Endothelial cell of umbilical vein (primary cell): ENCODE measurements at regions of chr5 and their contacts with region 1.

Region 1: GRCh38 chr5:54844905-54845566 is 140.4 kb downstream of the ESM1 start:
- DNase-seq: peak; percentile 65
- H3K4me3 ChIP-seq: no peak overlapping the region
- H3K27ac ChIP-seq: no peak overlapping the region
- H3K4me1 ChIP-seq: peaks cover 6% of the 10 kb centered on the region
- H3K27me3 ChIP-seq: peaks cover 0 to 2% of the 10 kb centered on the region in 2 experiments
- CTCF ChIP-seq: peak; percentile 17 to 45
- POLR2A ChIP-seq: no peak

Region 2: DNA sequence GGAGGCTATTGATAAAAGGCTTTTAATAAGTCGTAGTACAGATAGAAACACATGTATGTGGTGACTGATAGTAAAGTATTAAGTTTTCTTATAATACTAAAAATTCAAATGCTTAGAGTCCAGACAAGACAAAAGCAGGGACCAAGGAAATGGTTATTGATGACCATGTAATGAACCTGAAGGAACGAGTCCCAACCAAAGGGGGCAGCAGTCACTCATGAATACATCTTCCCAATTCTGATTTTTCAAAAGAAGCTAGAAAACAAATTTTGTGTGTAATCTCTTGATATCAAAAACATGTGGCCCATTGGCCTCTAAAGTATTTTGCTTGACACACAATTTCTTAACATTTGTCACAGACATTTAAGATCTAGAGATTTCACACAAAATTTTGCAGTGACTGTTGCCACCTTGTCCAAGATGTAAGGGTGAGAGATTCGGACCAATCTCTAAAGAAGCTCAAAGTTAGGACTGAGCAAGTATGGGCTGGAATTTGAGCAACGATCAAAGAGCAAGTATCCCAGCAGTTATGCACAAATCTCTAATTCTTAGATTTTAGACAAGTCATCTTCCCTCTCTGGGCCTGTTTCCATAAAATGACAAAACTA is 601.5 kb before region 1 on chr5:
- CTCF ChIA-PET with region 1: interaction called, 11 read pairs
- POLR2A ChIA-PET with region 1: no interaction called
- dilution Hi-C with region 1: no loop called
- intact Hi-C with region 1: loop called (anchors 10 kb)
- DNase-seq: peak; percentile 47
- H3K4me3 ChIP-seq: no peak overlapping the region
- H3K27ac ChIP-seq: no peak overlapping the region
- H3K4me1 ChIP-seq: peaks cover 14% of the 10 kb centered on the region
- H3K27me3 ChIP-seq: peaks cover 0 to 1% of the 10 kb centered on the region in 2 experiments
- CTCF ChIP-seq: peak; percentile 44 to 48
- POLR2A ChIP-seq: no peak

Region 3: DNA sequence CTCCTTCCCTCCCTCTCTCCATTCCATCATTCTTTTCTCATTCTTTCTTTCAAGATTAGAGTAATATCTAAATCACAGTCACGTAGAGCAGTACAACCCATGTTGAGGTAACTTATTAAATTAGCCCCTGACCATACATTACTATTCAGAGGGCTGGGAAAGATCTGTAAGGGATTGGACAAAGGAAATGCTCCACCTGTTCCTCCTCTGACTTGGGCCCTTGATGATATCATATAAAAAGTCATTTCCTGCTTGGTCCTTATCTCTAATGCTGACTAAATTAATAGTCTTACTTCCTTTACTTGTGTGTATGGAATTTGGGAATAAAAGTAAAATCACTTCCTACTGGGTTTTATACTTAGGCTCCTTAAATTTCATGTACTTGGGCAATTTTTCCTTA is 286.7 kb before region 1 on chr5:
- CTCF ChIA-PET with region 1: interaction called, 15 read pairs
- POLR2A ChIA-PET with region 1: no interaction called
- dilution Hi-C with region 1: no loop called
- intact Hi-C with region 1: no loop called
- DNase-seq: peak; percentile 76
- H3K4me3 ChIP-seq: peak overlapping the region in 1 of 3 experiments; percentile 5
- H3K27ac ChIP-seq: peak overlapping the region; percentile 58
- H3K4me1 ChIP-seq: peaks cover 41% of the 10 kb centered on the region
- H3K27me3 ChIP-seq: no peaks in the 10 kb centered on the region
- CTCF ChIP-seq: no peak
- POLR2A ChIP-seq: no peak

Region 4: DNA sequence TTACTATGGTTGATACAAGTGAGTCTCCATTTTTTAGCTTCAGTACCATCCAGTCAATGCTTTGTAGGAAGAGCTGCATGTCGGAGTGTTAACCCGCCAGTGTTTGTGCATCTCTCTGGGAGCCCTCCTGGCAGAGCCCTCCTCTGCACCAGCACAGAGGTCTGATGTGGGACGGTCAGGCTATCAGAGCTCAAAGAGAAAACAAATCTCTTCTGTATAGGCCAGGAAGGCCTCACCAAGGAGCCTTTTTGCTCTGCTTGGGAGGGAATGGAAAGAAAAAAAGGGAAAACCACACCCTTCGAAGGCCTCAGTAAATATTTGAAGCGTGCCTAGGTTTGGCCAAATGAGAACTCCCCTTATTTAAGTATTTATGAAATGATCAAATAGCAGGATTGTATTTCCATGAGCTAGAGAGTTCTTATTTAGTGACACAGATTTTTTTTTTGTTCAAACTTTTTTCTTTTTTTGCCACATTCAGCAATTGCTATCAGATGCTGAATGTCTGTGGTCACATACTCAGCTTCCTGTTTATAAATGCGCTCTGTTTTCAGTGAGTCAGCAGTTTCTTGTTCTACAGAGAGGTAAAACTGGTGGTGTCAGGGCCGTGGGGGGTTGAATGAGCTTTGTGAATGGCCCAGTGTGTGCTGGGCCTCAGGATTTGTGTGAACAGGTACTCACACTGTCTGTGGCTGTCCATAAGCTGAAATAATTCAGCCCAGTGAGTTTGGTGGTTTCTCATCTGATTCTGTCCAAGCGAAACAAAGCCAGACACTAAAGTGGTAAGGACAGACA is 100.8 kb before region 1 on chr5:
- CTCF ChIA-PET with region 1: interaction called, 26 read pairs
- POLR2A ChIA-PET with region 1: no interaction called
- dilution Hi-C with region 1: no loop called
- intact Hi-C with region 1: loop called (anchors 2 kb)
- DNase-seq: peak; percentile 73
- H3K4me3 ChIP-seq: no peak overlapping the region
- H3K27ac ChIP-seq: peak overlapping the region; percentile 46
- H3K4me1 ChIP-seq: peaks cover 20% of the 10 kb centered on the region
- H3K27me3 ChIP-seq: no peaks in the 10 kb centered on the region
- CTCF ChIP-seq: no peak
- POLR2A ChIP-seq: no peak

Region 5: GRCh38 chr5:54820346-54821134 is 24.5 kb before region 1 on chr5:
- CTCF ChIA-PET with region 1: interaction called, 15 read pairs
- POLR2A ChIA-PET with region 1: no interaction called
- dilution Hi-C with region 1: no loop called
- intact Hi-C with region 1: no loop called
- DNase-seq: peak; percentile 85
- H3K4me3 ChIP-seq: no peak overlapping the region
- H3K27ac ChIP-seq: peak overlapping the region; percentile 32
- H3K4me1 ChIP-seq: peaks cover 19% of the 10 kb centered on the region
- H3K27me3 ChIP-seq: no peaks in the 10 kb centered on the region
- CTCF ChIP-seq: no peak
- POLR2A ChIP-seq: no peak

Region 6: DNA sequence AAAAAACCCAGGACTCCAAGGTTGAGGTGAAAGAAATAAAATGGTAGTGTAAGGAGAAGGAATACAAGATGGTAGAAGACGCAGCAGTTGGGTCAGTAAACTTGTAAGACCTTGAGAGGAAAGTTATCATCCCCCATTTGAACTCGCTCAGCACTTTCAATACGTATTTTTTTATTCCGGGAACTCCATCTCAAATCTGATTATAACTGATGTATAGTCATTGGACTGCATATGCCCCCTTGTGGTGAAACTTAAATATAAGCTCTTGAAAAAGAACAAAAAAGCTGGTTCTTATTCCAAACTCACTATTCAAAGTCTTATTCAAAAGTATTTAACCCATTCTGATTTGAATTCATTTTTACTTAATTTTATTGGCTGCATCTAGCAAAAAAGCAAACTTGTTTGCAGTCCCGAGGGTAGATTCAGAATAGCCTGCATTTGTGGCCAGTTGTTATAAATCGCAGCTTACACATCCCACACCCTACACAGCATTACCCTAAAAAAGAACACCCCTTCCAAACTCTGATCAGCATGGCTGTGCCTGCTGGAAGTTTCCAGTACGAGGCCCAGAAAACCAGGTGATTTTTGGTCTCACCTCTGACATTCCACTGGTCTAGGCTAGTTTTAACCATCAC is 22.4 kb after region 1 on chr5:
- CTCF ChIA-PET with region 1: interaction called, 63 read pairs
- POLR2A ChIA-PET with region 1: no interaction called
- dilution Hi-C with region 1: no loop called
- intact Hi-C with region 1: loop called (anchors 1 kb)
- DNase-seq: peak; percentile 70
- H3K4me3 ChIP-seq: no peak overlapping the region
- H3K27ac ChIP-seq: no peak overlapping the region
- H3K4me1 ChIP-seq: no peaks in the 10 kb centered on the region
- H3K27me3 ChIP-seq: peaks cover 0 to 4% of the 10 kb centered on the region in 2 experiments
- CTCF ChIP-seq: peak; percentile 37 to 40
- POLR2A ChIP-seq: no peak

Region 7: GRCh38 chr5:55286411-55286933 is 441.4 kb after region 1 on chr5:
- CTCF ChIA-PET with region 1: no interaction called
- POLR2A ChIA-PET with region 1: no interaction called
- dilution Hi-C with region 1: no loop called
- intact Hi-C with region 1: no loop called
- DNase-seq: no peak
- H3K4me3 ChIP-seq: no peak overlapping the region
- H3K27ac ChIP-seq: no peak overlapping the region
- H3K4me1 ChIP-seq: no peaks in the 10 kb centered on the region
- H3K27me3 ChIP-seq: no peaks in the 10 kb centered on the region
- CTCF ChIP-seq: no peak
- POLR2A ChIP-seq: no peak